Calu3 (cell line): ENCODE measurements at regions of chr1 and their contacts with region 1.

Region 1: GRCh38 chr1:85240174-85240601 is 19.3 kb downstream of the C1orf52 start:
- DNase-seq: peak; percentile 26
- H3K4me3 Mint-ChIP-seq: no peak overlapping the region
- H3K27ac Mint-ChIP-seq: no peak overlapping the region
- H3K4me1 Mint-ChIP-seq: no peaks in the 10 kb centered on the region
- H3K27me3 Mint-ChIP-seq: no peaks in the 10 kb centered on the region
- CTCF ChIP-seq: no peak

Region 2: GRCh38 chr1:84892705-84893618 is 347.2 kb before region 1 on chr1 and contains the start of gene LPAR3:
- CTCF ChIA-PET with region 1: no interaction called
- intact Hi-C with region 1: no loop called
- DNase-seq: peak; percentile 78
- H3K4me3 Mint-ChIP-seq: peak within 1 kb of the TSS; percentile 79
- H3K27ac Mint-ChIP-seq: peak within 1 kb of the TSS; percentile 55
- H3K4me1 Mint-ChIP-seq: peaks cover 42% of the 10 kb centered on the region
- H3K27me3 Mint-ChIP-seq: no peaks in the 10 kb centered on the region
- CTCF ChIP-seq: no peak
- total RNA-seq, gene LPAR3: 13.2 and 14.0 TPM in 2 replicates

Region 3: DNA sequence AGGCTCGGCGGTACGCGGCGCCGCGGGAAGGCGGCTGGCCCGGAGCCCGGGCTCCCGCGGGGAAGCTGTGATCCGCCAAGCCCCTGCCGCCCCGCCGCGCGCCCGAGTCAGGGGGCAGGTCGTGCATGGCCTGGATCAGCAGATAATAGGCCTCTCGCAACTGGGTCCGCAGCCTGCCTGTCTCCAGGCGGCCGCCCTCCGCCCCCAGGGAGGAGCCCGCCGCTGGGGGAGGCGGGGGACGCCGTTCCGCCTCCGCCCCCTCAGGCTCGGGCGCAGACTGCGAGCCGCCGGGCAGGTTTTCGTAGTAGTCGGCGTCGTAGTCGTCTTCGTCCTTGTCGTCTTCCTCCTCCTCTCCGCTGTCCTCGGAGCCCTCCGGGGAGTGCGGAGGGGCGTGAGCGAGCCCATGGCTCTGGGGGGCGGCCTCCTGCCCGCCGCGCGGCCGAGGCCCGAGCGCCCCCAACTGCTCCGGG is 39.3 kb before region 1 on chr1 and contains the start of gene SYDE2:
- CTCF ChIA-PET with region 1: interaction called, 3 read pairs
- intact Hi-C with region 1: loop called (anchors 5 kb)
- DNase-seq: peak; percentile 86
- H3K4me3 Mint-ChIP-seq: peak within 1 kb of the TSS; percentile 94
- H3K27ac Mint-ChIP-seq: peak within 1 kb of the TSS; percentile 94
- H3K4me1 Mint-ChIP-seq: peaks cover 9% of the 10 kb centered on the region
- H3K27me3 Mint-ChIP-seq: no peaks in the 10 kb centered on the region
- CTCF ChIP-seq: no peak
- total RNA-seq, gene SYDE2: 8.3 and 10.4 TPM in 2 replicates